PC-3 (cell line): ENCODE measurements at regions of chr2 and their contacts with region 1.

Region 1: GRCh38 chr2:64595397-64596160 is 58.1 kb downstream of the SERTAD2 start:
- DNase-seq: peak; percentile 70
- ATAC-seq: peak; percentile 25
- H3K4me3 ChIP-seq: peak overlapping the region; percentile 5; the same call in 1 of the 2 replicates
- H3K27ac ChIP-seq: peak overlapping the region; percentile 84
- H3K4me1 ChIP-seq: peaks cover 47% of the 10 kb centered on the region
- H3K27me3 ChIP-seq: no peaks in the 10 kb centered on the region
- CTCF ChIP-seq: peak; percentile 55

Region 2: DNA sequence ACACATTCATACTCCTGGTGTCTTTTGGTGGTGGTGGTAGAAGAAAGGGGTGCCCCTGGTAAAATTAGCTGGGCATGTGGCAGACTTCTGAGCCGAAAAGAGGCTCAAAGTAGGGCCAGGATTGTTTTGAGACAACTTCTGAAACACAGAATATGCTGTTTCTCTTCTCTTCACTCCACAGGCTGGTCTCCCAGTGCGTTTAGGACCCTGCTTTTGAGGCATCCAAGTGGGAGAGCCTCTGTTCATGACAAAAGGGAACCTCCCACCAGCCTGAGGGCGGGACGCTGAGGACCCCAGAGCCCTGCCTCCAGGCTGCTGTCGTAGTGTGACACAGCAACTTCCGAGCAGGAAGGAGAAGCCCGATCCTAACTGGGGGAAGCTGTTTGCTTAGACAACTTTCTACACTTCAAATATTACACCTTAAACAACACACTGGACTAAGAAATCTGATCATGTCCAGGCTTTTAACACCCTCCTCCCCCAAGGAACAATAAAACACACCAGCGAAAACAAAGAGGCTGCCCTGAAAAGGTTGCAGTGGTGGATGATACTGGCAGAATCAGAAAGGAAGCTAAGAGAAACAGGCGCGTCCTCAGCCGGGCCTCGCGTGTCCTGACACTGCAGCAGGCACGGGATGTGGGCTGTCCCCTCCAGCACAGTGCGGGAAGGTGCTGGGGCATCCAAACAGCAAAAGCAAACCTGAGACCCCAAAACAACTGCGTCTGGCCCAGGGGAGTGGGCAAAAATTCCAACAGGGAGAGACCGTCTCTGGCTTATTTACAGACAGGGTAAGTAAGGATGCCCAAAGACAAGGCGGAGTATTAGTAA is 48.8 kb after region 1 on chr2:
- CTCF ChIA-PET with region 1: no interaction called
- POLR2A ChIA-PET with region 1: interaction called, 3 read pairs
- intact Hi-C with region 1: loop called (anchors 2 kb)
- DNase-seq: peak; percentile 80
- ATAC-seq: peak; percentile 68
- H3K4me3 ChIP-seq: peak overlapping the region; percentile 67
- H3K27ac ChIP-seq: peak overlapping the region; percentile 92
- H3K4me1 ChIP-seq: peaks cover 87% of the 10 kb centered on the region
- H3K27me3 ChIP-seq: no peaks in the 10 kb centered on the region
- CTCF ChIP-seq: no peak

Region 3: GRCh38 chr2:64653349-64654062 is 57.9 kb after region 1 on chr2 and contains the start of gene SERTAD2:
- CTCF ChIA-PET with region 1: interaction called, 3 read pairs
- POLR2A ChIA-PET with region 1: interaction called, 27 read pairs
- intact Hi-C with region 1: no loop called
- DNase-seq: peak; percentile 81
- ATAC-seq: peak; percentile 68
- H3K4me3 ChIP-seq: peak within 1 kb of the TSS; percentile 94
- H3K27ac ChIP-seq: peak within 1 kb of the TSS; percentile 58
- H3K4me1 ChIP-seq: peaks cover 46% of the 10 kb centered on the region
- H3K27me3 ChIP-seq: no peaks in the 10 kb centered on the region
- CTCF ChIP-seq: no peak; the same call in 1 of the 2 replicates
- total RNA-seq, gene SERTAD2: 19.8 and 34.9 TPM in 2 replicates

Region 4: GRCh38 chr2:64839844-64840243 is 244.3 kb after region 1 on chr2:
- CTCF ChIA-PET with region 1: interaction called, 14 read pairs
- POLR2A ChIA-PET with region 1: no interaction called
- intact Hi-C with region 1: no loop called
- DNase-seq: no peak
- ATAC-seq: no peak
- H3K4me3 ChIP-seq: no peak overlapping the region
- H3K27ac ChIP-seq: peak overlapping the region; percentile 86; the same call in 1 of the 2 replicates
- H3K4me1 ChIP-seq: peaks cover 57% of the 10 kb centered on the region
- H3K27me3 ChIP-seq: no peaks in the 10 kb centered on the region
- CTCF ChIP-seq: no peak

Region 5: GRCh38 chr2:64988420-64989125 is 393.0 kb after region 1 on chr2:
- CTCF ChIA-PET with region 1: no interaction called
- POLR2A ChIA-PET with region 1: interaction called, 14 read pairs
- intact Hi-C with region 1: no loop called
- DNase-seq: no peak
- ATAC-seq: peak; percentile 71
- H3K4me3 ChIP-seq: peak overlapping the region; percentile 97
- H3K27ac ChIP-seq: peak overlapping the region; percentile 57
- H3K4me1 ChIP-seq: peaks cover 17% of the 10 kb centered on the region
- H3K27me3 ChIP-seq: no peaks in the 10 kb centered on the region
- CTCF ChIP-seq: peak; percentile 47